ENCODE measurements at regions of chr1 and their contacts with region 1.

Region 1: DNA sequence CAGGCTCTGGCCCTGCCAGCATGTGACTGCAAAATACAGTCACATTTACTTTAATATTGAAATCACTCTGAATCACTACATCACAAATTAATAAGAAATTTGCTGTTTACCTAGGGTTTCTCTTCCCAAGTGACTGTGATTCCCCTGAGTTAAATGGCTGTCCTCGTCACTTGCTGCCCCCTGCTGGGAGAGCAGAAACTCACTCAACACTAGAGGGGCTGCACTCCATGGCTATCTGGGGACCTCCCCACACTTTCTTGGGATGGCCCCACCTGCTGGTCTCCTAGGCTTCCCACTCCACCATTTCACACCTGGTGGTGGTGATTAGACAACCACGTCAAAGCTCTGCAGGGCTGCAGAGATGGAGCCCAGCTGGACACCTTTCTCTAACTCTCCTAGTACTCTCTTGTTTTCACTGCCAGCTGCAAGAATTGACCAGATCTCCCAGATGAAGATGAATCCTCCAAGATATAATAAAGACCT is 63.4 kb downstream of the CD2 start:
- DNase-seq: peak; percentile 55
- H3K4me3 Mint-ChIP-seq: peak overlapping the region; percentile 56
- H3K27ac Mint-ChIP-seq: peak overlapping the region; percentile 56
- H3K4me1 Mint-ChIP-seq: peaks cover 59% of the 10 kb centered on the region
- H3K27me3 Mint-ChIP-seq: no peaks in the 10 kb centered on the region

Region 2: DNA sequence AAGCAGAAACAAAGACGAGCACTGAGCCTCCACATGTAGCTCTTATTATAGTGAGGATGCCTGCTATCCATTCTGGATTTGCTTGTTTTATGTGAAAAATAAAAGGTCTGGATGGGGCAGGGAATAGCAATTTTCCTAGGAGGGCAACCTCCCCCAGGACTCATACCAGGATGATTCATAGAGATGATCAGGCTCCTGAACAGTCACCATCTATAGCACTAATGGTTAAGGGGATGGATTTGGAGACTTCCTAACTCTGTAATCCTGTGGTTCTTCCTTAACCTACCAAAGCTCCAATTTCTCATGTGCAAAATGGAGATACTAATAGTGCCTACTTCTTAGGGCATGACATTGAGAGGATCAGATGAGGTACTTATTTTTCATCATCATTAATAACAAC is 212.3 kb before region 1 on chr1:
- intact Hi-C with region 1: no loop called
- DNase-seq: no peak
- H3K4me3 Mint-ChIP-seq: no peak overlapping the region
- H3K27ac Mint-ChIP-seq: no peak overlapping the region
- H3K4me1 Mint-ChIP-seq: peaks cover 19% of the 10 kb centered on the region
- H3K27me3 Mint-ChIP-seq: no peaks in the 10 kb centered on the region

Region 3: GRCh38 chr1:116724765-116725375 is 92.8 kb before region 1 on chr1:
- intact Hi-C with region 1: loop called (anchors 1 kb)
- DNase-seq: peak; percentile 64
- H3K4me3 Mint-ChIP-seq: no peak overlapping the region
- H3K27ac Mint-ChIP-seq: no peak overlapping the region
- H3K4me1 Mint-ChIP-seq: peaks cover 43% of the 10 kb centered on the region
- H3K27me3 Mint-ChIP-seq: no peaks in the 10 kb centered on the region

Region 4: DNA sequence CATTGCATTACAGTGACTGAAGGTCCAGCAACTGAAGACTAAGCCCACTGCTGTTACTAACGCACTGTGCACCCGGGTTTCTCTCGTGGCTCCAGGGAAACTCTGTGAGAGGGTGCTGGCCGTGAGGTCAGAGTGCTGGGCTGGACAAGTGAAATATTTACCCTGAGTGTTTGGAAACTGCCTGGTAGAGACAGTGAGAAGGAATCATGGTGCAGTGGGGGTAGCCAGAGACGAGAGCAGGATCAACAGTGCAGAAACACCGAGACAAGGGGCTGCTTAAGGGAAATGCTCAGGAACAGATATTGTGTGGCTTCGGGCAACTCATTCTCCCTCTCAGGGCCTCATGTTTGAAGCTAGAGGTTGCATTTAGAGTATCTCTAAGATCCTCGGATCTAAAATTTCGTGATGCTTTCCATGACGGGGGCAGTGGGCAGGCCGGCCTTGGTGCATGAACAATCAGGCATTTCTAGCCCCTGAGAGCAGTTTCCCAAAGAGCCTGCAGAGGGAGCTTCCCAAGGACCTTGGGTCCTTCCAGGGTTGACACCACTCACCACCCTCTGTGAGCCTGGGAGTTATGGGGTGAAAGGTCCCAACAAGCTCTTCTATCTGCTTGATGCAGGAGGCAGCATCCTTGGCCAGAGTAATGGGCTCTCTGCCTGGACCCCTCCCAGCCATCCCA is 53.7 kb before region 1 on chr1:
- intact Hi-C with region 1: loop called (anchors 1 kb)
- DNase-seq: peak; percentile 50
- H3K4me3 Mint-ChIP-seq: peak overlapping the region; percentile 84
- H3K27ac Mint-ChIP-seq: peak overlapping the region; percentile 100
- H3K4me1 Mint-ChIP-seq: peaks cover 95% of the 10 kb centered on the region
- H3K27me3 Mint-ChIP-seq: peaks cover 3% of the 10 kb centered on the region

Region 5: GRCh38 chr1:116794804-116795481 is 22.7 kb before region 1 on chr1:
- intact Hi-C with region 1: loop called (anchors 2 kb)
- DNase-seq: no peak
- H3K4me3 Mint-ChIP-seq: no peak overlapping the region
- H3K27ac Mint-ChIP-seq: no peak overlapping the region
- H3K4me1 Mint-ChIP-seq: peaks cover 68% of the 10 kb centered on the region
- H3K27me3 Mint-ChIP-seq: no peaks in the 10 kb centered on the region

Region 6: DNA sequence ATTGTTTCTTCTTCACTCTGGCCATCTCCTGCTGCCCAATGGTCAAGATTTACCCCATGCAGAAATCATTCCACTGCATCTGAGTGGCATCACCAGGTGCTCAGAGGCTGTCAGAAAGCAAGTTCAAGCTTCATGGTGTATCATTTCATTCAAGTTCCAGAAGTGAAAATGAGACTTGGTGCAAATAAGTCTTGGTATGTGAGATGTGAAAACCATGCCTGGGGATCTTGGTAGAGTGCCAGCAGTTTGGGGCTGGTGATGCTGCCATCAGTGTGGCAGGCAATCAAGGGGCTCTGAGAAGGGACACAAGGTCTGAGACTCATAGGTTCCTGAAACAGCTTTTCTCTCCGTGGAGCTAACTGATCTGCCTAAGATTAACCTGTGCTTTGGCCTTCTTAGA is 11.4 kb before region 1 on chr1:
- intact Hi-C with region 1: loop called (anchors 1 kb)
- DNase-seq: peak; percentile 40
- H3K4me3 Mint-ChIP-seq: peak overlapping the region; percentile 71
- H3K27ac Mint-ChIP-seq: peak overlapping the region; percentile 94
- H3K4me1 Mint-ChIP-seq: peaks cover 93% of the 10 kb centered on the region
- H3K27me3 Mint-ChIP-seq: no peaks in the 10 kb centered on the region

Region 7: DNA sequence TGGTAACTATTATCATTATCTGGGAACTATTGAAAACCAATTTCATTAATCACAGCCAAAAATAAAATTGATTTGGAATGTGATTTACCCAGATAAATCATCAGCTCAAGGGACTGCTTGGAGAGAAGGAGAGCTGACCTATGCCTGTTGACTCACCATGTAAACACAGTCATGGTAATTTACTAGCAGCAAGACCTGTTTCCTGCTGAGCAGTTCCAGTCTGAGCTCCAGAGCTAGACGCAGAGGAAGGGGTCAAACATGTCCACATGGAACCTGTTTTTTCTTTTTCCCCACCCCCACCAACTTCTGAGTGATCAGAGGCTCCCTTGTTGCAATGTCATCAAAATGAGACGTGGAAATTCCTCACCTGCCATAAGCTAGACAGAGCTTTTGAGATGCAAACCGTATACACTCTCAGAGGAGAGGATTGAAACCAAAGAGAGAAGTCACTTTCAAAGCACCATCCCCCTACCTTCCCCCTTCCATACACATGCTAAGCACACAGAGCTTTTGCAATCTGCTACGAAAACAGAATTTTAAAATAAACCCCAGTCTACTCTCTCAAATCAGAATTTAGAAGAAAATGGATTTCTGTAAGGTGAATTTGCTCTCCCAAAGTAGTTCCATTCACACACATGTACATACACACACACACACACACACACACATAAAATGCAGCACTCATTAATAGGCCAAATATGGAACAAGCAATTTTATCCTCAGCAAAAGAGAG is 36.2 kb after region 1 on chr1:
- intact Hi-C with region 1: no loop called
- DNase-seq: no peak
- H3K4me3 Mint-ChIP-seq: no peak overlapping the region
- H3K27ac Mint-ChIP-seq: peak overlapping the region; percentile 53
- H3K4me1 Mint-ChIP-seq: peaks cover 34% of the 10 kb centered on the region
- H3K27me3 Mint-ChIP-seq: no peaks in the 10 kb centered on the region

Region 8: DNA sequence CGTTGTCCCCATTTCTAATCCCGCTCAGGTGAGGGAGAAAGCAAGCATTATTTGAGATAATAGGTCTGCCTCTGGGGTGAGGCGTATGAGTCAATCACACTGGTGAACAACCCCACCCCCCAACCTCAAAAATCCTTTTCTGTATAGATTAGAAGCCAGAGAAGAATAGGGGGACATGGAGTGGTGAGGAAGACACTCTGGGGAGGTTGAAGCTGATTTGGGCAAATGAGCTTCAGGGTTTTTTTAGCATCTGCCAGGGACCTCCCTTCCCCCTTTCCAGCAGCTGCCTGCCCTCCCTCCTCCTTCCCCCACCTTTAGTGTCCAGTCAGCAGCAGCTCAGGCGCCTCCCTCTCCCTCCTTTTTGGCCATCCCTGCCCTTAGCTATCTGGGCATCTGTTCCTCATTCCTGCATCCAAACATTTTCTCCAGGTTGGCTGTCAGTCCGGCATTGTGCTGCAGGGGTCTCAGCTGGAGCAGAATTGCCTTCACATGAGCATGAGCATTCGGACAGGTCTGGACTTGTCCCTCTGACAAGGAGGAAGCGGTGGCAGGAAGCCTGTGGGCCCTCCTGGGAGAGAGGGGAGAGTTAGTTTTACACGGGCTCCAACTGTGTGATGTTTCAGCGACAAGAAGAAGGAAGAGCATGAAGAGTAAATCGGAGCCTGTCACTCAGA is 61.3 kb after region 1 on chr1:
- intact Hi-C with region 1: loop called (anchors 2 kb)
- DNase-seq: no peak
- H3K4me3 Mint-ChIP-seq: no peak overlapping the region
- H3K27ac Mint-ChIP-seq: no peak overlapping the region
- H3K4me1 Mint-ChIP-seq: peaks cover 21% of the 10 kb centered on the region
- H3K27me3 Mint-ChIP-seq: no peaks in the 10 kb centered on the region

Region 9: DNA sequence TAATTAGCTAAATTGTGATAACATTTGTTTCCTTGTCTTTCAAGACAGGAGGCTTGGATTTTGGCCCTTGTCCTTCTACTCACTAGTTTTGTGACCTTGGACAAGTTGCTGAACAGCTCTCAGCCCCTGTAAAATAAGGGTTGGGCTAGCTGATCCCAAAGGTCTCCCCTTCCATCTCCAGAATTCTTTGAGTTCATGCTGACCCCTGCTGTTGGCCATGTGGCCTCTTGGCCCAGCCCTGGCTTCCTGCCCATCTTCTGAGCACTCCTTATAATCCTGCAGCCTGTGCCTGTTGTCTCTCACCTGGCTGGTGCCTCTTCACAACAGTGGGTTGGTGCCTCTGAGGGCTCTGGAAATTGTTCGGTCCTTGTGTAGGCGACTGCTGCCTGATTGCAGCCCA is 102.2 kb after region 1 on chr1:
- intact Hi-C with region 1: no loop called
- DNase-seq: no peak
- H3K4me3 Mint-ChIP-seq: no peak overlapping the region
- H3K27ac Mint-ChIP-seq: peak overlapping the region; percentile 41
- H3K4me1 Mint-ChIP-seq: peaks cover 11% of the 10 kb centered on the region
- H3K27me3 Mint-ChIP-seq: no peaks in the 10 kb centered on the region

Region 10: DNA sequence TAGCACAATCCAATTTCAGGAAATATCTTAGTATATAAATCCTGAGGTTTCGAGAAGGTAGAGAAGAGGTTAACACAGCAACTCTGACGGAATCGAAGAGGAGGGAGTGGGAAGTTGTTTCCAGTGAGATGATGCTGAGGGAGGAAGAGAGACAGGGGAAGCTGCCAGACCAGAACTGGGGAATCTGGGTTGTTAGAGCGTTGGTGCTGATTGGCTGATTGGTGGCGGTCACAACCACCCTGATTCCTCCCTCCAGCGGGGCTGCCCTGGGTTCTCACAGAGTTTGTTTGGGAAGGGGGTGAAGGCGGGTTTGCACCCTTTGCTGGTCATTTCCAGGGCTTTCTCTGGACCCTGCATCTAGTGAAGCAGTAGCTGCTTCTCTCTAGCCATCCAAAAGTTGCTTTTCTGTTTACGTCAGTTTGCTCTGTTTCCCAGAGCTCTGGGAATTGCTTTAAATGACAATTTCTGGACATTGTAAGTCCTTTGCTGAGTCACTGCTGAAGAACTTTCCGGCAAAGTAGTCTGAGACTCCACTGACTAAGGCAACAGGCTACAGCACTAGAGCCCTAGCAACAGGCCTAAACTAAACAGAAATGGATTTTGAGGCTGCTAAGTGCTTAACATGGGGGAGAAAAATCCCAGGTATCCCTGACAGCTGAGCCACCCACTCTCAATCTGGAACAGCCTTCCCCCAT is 878.3 kb after region 1 on chr1:
- intact Hi-C with region 1: no loop called
- DNase-seq: no peak
- H3K4me3 Mint-ChIP-seq: no peak overlapping the region
- H3K27ac Mint-ChIP-seq: no peak overlapping the region
- H3K4me1 Mint-ChIP-seq: peaks cover 7% of the 10 kb centered on the region
- H3K27me3 Mint-ChIP-seq: peaks cover 27% of the 10 kb centered on the region